ENCODE measurements at regions of chr1 and their contacts with region 1.

Region 1: DNA sequence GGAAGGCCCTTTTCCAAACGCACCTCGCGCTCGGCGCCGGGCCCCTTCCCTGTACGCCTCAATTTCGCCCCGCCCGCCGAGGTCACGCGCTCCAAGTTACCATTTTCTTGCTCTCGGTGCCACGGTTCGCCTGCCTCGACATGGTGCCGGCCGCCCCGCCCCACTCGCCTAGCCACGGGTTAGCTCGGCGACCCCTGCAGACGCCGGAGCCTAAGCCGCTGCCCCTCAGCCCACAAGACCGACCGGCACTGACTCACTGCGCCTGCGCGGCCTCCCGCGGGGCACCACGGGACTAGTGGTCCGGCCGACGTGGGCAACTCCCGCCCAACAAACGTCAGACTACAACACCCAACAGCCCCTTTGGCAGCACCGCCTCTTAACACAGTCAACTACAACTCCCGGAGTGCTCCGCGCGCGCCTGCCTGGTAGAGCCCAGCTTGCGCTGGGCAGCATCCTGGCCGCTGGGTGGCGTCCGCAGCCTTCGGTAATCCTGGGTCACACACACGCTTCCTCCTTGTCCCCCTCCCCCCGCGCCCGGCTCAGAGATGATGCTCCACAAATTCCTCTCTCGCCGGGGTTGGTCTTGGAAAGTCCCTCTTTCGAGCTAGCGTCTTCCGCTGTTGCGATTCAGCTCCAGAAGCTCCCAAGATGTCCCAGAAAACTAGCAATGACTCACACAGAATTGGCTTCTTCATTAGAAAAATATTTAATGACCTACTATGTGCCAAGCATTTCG is at the start of gene TRAPPC3:
- DNase-seq: peak; percentile 99 to 100 (median 100)
- H3K4me3 ChIP-seq: peak within 1 kb of the TSS; percentile 44 to 92 (median 75)
- H3K27ac ChIP-seq: peak within 1 kb of the TSS; percentile 81 to 95
- H3K4me1 ChIP-seq: peaks cover 16 to 53% (median 49%) of the 10 kb centered on the region in 4 experiments
- H3K27me3 ChIP-seq: no peaks in the 10 kb centered on the region

Region 2: GRCh38 chr1:36134505-36135329 is 14.7 kb before region 1 on chr1:
- CTCF ChIA-PET with region 1: interaction called, 44 read pairs
- POLR2A ChIA-PET with region 1: interaction called, 5 read pairs
- DNase-seq: peak in 2 of 3 donors; percentile 58 to 60
- H3K4me3 ChIP-seq: no peak overlapping the region
- H3K27ac ChIP-seq: no peak overlapping the region
- H3K4me1 ChIP-seq: peaks cover 0 to 2% (median 0%) of the 10 kb centered on the region in 4 experiments
- H3K27me3 ChIP-seq: no peaks in the 10 kb centered on the region

Region 3: GRCh38 chr1:36166938-36167910 is 17.8 kb after region 1 on chr1:
- CTCF ChIA-PET with region 1: interaction called, 98 read pairs
- POLR2A ChIA-PET with region 1: interaction called, 36 read pairs
- DNase-seq: no peak
- H3K4me3 ChIP-seq: no peak overlapping the region
- H3K27ac ChIP-seq: peak overlapping the region in 1 of 2 experiments; percentile 48
- H3K4me1 ChIP-seq: peaks cover 0 to 12% (median 8%) of the 10 kb centered on the region in 4 experiments
- H3K27me3 ChIP-seq: no peaks in the 10 kb centered on the region

Region 4: DNA sequence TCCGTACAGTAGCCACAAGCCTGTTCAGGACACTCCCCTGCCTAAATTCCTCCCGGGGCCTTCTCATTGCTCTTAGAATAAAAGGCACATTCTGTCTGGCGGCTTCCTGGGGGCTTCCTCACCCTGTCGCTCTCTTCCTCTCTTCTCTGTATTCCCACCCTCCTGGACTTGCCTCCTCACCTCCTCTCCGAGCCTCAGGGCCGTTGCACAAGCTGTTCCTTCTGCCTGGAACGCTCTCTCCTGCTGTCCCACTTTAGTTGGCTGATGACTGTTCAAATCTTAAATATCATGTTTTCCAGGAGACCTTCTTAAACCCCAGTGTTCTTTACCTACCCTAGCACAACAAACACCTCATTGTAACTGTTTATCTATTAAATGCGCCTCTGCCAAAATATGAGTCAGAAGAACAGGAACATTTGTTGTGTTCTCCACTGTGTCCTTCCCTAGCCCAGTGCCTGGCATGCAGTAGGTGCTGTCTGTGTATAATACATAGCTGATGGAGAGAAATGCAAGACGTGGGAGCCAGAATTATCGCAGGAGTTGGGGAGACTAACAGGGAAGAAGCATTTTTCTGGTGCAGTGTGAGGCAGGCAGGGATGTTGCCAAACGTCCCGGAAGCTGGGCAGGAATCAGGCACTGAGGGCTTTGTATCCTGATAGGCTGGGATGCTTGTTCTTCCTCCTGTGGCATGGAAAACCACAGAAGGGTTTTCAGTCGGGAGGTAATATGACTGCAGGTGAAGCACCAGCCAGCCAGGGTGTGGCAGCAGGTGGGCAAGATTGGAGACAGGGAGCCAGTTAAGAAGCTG is 50.7 kb after region 1 on chr1:
- CTCF ChIA-PET with region 1: interaction called, 10 read pairs
- POLR2A ChIA-PET with region 1: no interaction called
- DNase-seq: no peak
- H3K4me3 ChIP-seq: no peak overlapping the region
- H3K27ac ChIP-seq: no peak overlapping the region
- H3K4me1 ChIP-seq: peaks cover 0 to 8% (median 2%) of the 10 kb centered on the region in 4 experiments
- H3K27me3 ChIP-seq: no peaks in the 10 kb centered on the region

Region 5: DNA sequence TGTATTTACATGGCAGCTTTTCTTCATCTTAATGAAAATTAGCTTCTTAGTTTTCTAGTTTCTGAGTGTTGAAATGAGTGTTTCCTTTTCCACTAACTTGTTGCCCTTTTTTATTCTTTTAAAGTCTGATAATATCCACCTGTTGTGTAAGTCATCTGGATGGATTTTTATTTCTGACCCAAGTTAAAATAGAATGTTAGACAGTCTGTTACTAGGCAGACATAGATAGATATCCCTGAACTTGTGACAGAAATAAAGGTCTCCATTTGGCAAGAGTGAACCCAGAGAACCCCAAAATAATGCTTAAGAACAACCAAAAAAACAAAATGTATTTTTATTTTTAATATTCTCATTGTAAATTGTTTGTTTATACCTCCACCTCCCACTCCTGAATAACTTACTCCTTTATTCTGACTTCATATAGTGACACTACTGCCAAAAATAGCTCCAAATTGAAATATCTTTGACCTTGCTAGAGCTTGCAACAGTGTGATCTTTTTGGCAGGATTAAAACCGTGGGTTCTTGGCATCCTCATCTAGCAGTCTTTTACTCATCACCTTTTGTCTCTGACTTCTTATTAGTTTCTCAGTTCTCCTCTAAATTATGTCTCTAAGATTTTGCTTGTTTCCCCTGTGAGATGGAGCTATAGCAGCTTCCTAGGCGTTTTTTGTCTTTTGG is 129.8 kb after region 1 on chr1:
- CTCF ChIA-PET with region 1: interaction called, 22 read pairs
- POLR2A ChIA-PET with region 1: no interaction called
- DNase-seq: no peak
- H3K4me3 ChIP-seq: no peak overlapping the region
- H3K27ac ChIP-seq: peak overlapping the region in 1 of 2 experiments; percentile 43
- H3K4me1 ChIP-seq: no peaks in the 10 kb centered on the region
- H3K27me3 ChIP-seq: no peaks in the 10 kb centered on the region

Measured in common myeloid progenitor, CD34-positive (primary cell).